ENCODE measurements at regions of chr5 and their contacts with region 1.

Region 1: DNA sequence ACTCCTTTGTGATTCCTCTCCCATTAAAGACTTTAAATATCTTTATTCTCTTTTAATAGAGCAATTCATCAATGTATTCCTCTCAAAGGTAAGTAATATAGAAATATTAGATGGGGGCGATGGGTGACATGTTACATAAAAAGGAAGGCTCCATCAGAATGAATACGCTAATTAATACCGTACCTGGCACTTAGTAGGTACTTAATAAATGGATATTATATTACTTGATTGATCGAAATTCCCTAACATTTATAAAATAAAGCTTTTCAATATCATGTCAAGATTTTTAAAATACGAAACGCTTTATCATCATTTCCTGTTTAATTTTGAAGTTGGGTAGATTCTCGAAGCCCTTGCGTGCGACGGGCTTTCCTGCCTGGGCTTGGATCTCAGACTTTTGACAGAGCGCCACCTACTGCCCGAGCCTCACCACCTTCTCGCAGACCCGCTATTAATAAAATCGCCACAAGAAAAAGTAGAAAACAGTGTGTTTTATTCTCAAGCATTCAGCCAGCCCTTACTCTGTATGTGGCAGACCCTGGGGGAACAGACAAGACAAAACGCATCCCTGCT is 99.4 kb downstream of the C5orf15 start:
- DNase-seq: peak; percentile 73
- ATAC-seq: peak; percentile 71
- H3K4me3 ChIP-seq: no peak overlapping the region
- H3K27ac ChIP-seq: no peak overlapping the region
- H3K4me1 ChIP-seq: no peaks in the 10 kb centered on the region
- H3K27me3 ChIP-seq: peaks cover 23% of the 10 kb centered on the region; the same call in 1 of the 2 replicates
- CTCF ChIP-seq: peak; percentile 88
- POLR2A ChIP-seq: no peak
- RAD21 ChIP-seq: peak; percentile 72

Region 2: GRCh38 chr5:133423618-133424282 is 445.3 kb before region 1 on chr5:
- CTCF ChIA-PET with region 1: no interaction called
- POLR2A ChIA-PET with region 1: no interaction called
- dilution Hi-C with region 1: no loop called
- in situ Hi-C with region 1: no loop called
- intact Hi-C with region 1: loop called (anchors 1 kb)
- DNase-seq: peak; percentile 12
- ATAC-seq: peak; percentile 91
- H3K4me3 ChIP-seq: no peak overlapping the region
- H3K27ac ChIP-seq: no peak overlapping the region
- H3K4me1 ChIP-seq: no peaks in the 10 kb centered on the region
- H3K27me3 ChIP-seq: peaks cover 8% of the 10 kb centered on the region
- CTCF ChIP-seq: peak; percentile 65
- POLR2A ChIP-seq: no peak
- RAD21 ChIP-seq: peak; percentile 47; the same call in 1 of the 2 replicates

Region 3: DNA sequence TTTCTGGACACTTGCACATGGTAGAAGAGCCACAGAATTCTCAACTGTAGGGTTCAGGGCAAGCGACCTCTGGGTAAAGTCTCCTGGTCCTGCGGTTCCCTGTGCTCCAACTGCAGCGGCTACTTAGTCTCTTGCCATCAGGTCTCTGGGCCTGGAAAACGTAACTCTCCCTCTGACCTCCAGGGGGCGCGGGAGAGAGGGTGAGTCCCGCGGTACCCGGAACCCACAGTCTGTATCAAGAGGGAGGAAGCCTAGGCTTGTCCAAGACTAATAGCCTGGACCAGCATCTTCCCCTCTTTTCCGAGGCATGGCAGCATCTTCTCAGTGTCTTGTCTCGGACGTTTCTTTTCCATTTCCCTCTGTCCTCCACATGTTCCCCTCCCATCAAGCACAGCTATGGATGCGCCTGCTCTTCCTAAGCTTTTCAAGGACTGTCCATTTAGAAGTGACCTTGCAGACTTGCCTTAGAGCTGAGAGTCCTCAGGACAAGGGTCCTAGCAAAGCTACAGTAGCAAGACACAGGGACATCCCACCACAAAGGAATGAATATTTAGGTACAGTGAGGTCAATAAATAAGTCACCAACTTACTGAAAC is 316.0 kb before region 1 on chr5:
- CTCF ChIA-PET with region 1: interaction called, 3 read pairs
- POLR2A ChIA-PET with region 1: no interaction called
- dilution Hi-C with region 1: no loop called
- in situ Hi-C with region 1: no loop called
- intact Hi-C with region 1: loop called (anchors 5 kb)
- DNase-seq: peak; percentile 26
- ATAC-seq: peak; percentile 86
- H3K4me3 ChIP-seq: no peak overlapping the region
- H3K27ac ChIP-seq: no peak overlapping the region
- H3K4me1 ChIP-seq: no peaks in the 10 kb centered on the region
- H3K27me3 ChIP-seq: 0 out of 2 replicates have a peak, but pooled peaks cover 2% of the 10 kb centered on the region
- CTCF ChIP-seq: peak; percentile 56
- POLR2A ChIP-seq: no peak
- RAD21 ChIP-seq: peak; percentile 45

Region 4: GRCh38 chr5:133652951-133653759 is 215.9 kb before region 1 on chr5:
- CTCF ChIA-PET with region 1: no interaction called
- POLR2A ChIA-PET with region 1: no interaction called
- dilution Hi-C with region 1: no loop called
- in situ Hi-C with region 1: no loop called
- intact Hi-C with region 1: no loop called
- DNase-seq: no peak
- ATAC-seq: no peak
- H3K4me3 ChIP-seq: no peak overlapping the region
- H3K27ac ChIP-seq: no peak overlapping the region
- H3K4me1 ChIP-seq: no peaks in the 10 kb centered on the region
- H3K27me3 ChIP-seq: no peaks in the 10 kb centered on the region; the same call in none of the 2 replicates
- CTCF ChIP-seq: no peak
- POLR2A ChIP-seq: no peak
- RAD21 ChIP-seq: no peak

Region 5: GRCh38 chr5:133754575-133755169 is 114.4 kb before region 1 on chr5:
- CTCF ChIA-PET with region 1: no interaction called
- POLR2A ChIA-PET with region 1: no interaction called
- dilution Hi-C with region 1: no loop called
- in situ Hi-C with region 1: no loop called
- intact Hi-C with region 1: loop called (anchors 1 kb)
- DNase-seq: peak; percentile 7
- ATAC-seq: no peak; the same call in 1 of the 2 replicates
- H3K4me3 ChIP-seq: no peak overlapping the region
- H3K27ac ChIP-seq: no peak overlapping the region
- H3K4me1 ChIP-seq: no peaks in the 10 kb centered on the region
- H3K27me3 ChIP-seq: peaks cover 5% of the 10 kb centered on the region
- CTCF ChIP-seq: peak; percentile 42
- POLR2A ChIP-seq: no peak
- RAD21 ChIP-seq: peak; percentile 32; the same call in 1 of the 2 replicates